Activated CD8-positive, alpha-beta T cell treated with anti-CD3 and anti-CD28 coated beads, Interleukin-2, amount 10 ng/mL, durations not matched to agents 7 days and 5 days (primary cell): ENCODE measurements at regions of chr16 and their contacts with region 1.

Region 1: DNA sequence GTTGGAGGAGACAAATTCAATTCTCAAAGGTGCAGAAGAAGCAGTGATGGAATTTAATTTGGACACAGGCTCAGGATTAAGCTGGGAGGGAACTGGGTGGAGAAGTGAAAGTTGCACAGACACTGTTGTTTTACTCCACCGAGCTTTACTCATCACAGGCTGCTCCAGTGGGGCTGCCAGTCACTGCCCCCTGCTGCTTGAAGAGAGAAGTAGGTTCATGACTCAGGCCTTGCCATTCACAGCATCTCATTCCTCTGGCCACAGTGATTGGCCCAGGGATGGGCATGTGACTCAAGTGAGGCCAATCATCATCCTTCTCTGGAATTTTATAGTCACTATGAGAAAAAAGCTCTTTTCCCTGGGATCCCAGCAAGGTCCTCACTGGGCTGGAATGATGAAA is 11.8 kb downstream of the GNAO1 start:
- DNase-seq: peak; percentile 65
- ATAC-seq: peak; percentile 66
- H3K4me3 Mint-ChIP-seq: no peak overlapping the region
- H3K27ac Mint-ChIP-seq: no peak overlapping the region
- H3K4me1 Mint-ChIP-seq: no peaks in the 10 kb centered on the region
- H3K27me3 Mint-ChIP-seq: peaks cover 9% of the 10 kb centered on the region

Region 2: DNA sequence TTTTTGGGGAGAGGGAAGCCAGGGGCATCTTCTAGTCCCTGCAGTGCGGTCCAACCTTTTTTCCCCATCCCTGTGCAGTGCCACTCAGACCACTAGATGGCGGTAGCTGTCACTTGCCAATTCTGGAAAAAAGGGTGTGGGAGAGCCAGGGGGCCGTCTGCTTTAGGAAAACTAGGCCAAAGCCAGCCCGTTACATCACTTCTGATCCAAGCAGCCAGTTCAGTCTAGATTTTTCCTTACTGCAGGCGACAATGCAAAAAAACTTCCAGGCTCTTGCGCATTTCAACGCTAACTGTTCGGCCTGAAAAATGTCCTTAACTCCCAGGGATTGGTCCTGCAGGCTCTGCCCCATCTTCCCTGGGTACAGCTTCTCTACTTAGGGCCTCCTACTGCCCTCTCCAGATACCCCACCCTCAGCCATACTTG is 258.7 kb before region 1 on chr16:
- CTCF ChIA-PET with region 1: interaction called, 12 read pairs
- POLR2A ChIA-PET with region 1: interaction called, 3 read pairs
- DNase-seq: peak; percentile 58
- ATAC-seq: peak; percentile 71
- H3K4me3 Mint-ChIP-seq: no peak overlapping the region
- H3K27ac Mint-ChIP-seq: no peak overlapping the region
- H3K4me1 Mint-ChIP-seq: no peaks in the 10 kb centered on the region
- H3K27me3 Mint-ChIP-seq: peaks cover 20% of the 10 kb centered on the region

Region 3: DNA sequence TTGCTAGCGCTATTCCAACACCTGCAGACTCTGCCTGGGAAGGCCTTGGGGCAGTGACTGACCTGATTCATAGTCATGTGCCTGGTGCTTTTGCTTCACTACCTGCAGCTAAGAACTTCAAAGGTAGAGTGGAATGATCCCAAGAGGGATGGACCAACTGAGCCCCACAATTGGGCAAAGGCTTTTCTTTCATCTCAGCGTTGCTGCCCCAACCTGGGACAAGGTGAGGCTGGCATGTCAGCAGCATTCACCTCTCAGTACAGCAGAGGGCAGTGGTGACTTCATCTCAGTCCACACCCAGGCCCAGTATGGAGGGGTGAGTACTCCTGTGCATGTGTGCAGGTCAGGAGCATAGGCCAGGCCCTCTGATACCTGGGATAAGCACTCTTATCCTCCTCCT is 161.4 kb before region 1 on chr16:
- CTCF ChIA-PET with region 1: interaction called, 13 read pairs
- POLR2A ChIA-PET with region 1: no interaction called
- DNase-seq: peak; percentile 41
- ATAC-seq: peak; percentile 67
- H3K4me3 Mint-ChIP-seq: no peak overlapping the region
- H3K27ac Mint-ChIP-seq: no peak overlapping the region
- H3K4me1 Mint-ChIP-seq: no peaks in the 10 kb centered on the region
- H3K27me3 Mint-ChIP-seq: peaks cover 21% of the 10 kb centered on the region

Region 4: DNA sequence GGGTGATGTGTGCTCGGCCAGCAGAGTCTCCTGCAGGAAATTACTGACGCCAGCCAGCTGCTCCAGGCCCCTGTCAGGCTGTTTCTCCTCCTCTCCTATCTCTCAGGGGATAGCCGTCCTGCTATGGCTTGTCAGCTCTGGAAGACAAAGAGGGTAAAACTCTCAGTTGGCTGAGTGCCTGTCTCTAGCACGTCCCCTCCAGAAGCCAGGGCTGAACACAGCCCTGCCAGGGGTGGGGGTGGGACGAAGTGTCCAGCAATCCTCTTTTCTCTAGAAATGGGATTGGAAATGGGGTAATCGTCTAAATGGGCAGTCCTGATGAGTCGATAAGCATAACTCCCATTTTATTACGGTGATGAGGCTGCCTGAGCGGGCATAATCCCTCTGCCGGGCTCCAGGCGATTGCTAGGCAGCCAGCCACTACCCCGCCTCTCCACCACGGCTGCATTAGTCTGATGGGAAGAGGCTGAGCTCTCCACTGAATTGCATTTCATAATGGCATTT is 100.8 kb before region 1 on chr16:
- CTCF ChIA-PET with region 1: no interaction called
- POLR2A ChIA-PET with region 1: no interaction called
- DNase-seq: no peak
- ATAC-seq: no peak
- H3K4me3 Mint-ChIP-seq: no peak overlapping the region
- H3K27ac Mint-ChIP-seq: no peak overlapping the region
- H3K4me1 Mint-ChIP-seq: no peaks in the 10 kb centered on the region
- H3K27me3 Mint-ChIP-seq: peaks cover 27% of the 10 kb centered on the region

Region 5: GRCh38 chr16:56191156-56191815 is 11.8 kb before region 1 on chr16 and contains the start of gene GNAO1:
- CTCF ChIA-PET with region 1: interaction called, 14 read pairs
- POLR2A ChIA-PET with region 1: no interaction called
- DNase-seq: peak; percentile 59
- ATAC-seq: peak; percentile 84
- H3K4me3 Mint-ChIP-seq: peak within 1 kb of the TSS; percentile 72
- H3K27ac Mint-ChIP-seq: no peak within 1 kb of the TSS
- H3K4me1 Mint-ChIP-seq: peaks cover 29% of the 10 kb centered on the region
- H3K27me3 Mint-ChIP-seq: peaks cover 71% of the 10 kb centered on the region
- total RNA-seq, gene GNAO1: 2.7 TPM